Activated T-helper 2 cell treated with anti-CD3 and anti-CD28 coated beads, Interferon-gamma antibody, Interleukin-2, Interleukin-4, amounts not matched to agents 10 μg/mL and 5 μg/mL and 100 μg/mL, durations not matched to agents 14 hours and 24 hours and 36 hours (primary cell): ENCODE measurements at regions of chr5 and their contacts with region 1.

Region 1: GRCh38 chr5:96896806-96897205 is 20.5 kb downstream of the ERAP2 start:
- DNase-seq: no peak
- H3K4me3 Mint-ChIP-seq: peak overlapping the region; percentile 82
- H3K27ac Mint-ChIP-seq: peak overlapping the region; percentile 96
- H3K4me1 Mint-ChIP-seq: peaks cover 50% of the 10 kb centered on the region
- H3K27me3 Mint-ChIP-seq: no peaks in the 10 kb centered on the region

Region 2: DNA sequence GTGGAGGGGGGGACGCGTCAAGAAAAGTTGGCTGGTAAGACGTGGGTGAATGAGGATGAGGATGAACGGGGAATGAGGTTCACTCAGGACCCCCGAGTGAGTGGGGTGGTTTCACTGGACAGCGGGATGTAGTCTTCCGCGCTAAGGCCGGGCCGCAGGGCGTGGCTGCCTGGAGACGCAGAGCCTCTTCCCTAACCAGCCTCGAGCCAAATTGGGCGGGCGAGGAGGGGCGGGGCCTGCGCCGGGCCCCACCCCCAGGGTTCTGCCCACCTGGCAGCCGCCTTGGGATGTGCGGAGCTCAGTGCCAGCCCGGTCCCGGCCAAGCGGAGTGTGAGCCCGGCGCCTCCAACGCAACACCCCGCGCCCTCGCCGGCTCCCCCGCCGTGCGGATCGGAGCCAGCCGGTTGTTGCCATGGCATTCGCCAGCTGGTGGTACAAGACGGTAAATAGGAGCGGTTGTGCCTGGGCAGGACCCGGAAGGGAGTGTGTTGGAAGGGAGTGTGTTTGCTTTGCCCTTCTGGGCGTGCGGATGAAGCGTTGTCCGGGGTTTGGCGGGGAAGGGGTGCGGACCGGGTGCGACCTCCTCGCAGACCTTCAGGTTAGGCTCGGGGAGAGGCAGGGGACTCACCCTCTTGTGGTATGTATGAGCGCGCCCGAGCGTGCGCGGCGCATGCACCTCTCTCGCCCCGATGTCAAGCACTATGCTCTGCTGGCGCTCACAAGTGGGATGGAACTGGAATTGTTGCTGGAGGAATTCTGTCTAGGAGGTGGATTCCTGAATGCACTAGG is 233.9 kb before region 1 on chr5:
- intact Hi-C with region 1: loop called (anchors 10 kb)
- DNase-seq: peak; percentile 82
- H3K4me3 Mint-ChIP-seq: peak overlapping the region; percentile 90
- H3K27ac Mint-ChIP-seq: peak overlapping the region; percentile 96
- H3K4me1 Mint-ChIP-seq: peaks cover 55% of the 10 kb centered on the region
- H3K27me3 Mint-ChIP-seq: peaks cover 26% of the 10 kb centered on the region

Region 3: GRCh38 chr5:96861076-96861475 is 35.7 kb before region 1 on chr5:
- intact Hi-C with region 1: loop called (anchors 5 kb)
- DNase-seq: no peak
- H3K4me3 Mint-ChIP-seq: no peak overlapping the region
- H3K27ac Mint-ChIP-seq: no peak overlapping the region
- H3K4me1 Mint-ChIP-seq: peaks cover 38% of the 10 kb centered on the region
- H3K27me3 Mint-ChIP-seq: no peaks in the 10 kb centered on the region

Region 4: DNA sequence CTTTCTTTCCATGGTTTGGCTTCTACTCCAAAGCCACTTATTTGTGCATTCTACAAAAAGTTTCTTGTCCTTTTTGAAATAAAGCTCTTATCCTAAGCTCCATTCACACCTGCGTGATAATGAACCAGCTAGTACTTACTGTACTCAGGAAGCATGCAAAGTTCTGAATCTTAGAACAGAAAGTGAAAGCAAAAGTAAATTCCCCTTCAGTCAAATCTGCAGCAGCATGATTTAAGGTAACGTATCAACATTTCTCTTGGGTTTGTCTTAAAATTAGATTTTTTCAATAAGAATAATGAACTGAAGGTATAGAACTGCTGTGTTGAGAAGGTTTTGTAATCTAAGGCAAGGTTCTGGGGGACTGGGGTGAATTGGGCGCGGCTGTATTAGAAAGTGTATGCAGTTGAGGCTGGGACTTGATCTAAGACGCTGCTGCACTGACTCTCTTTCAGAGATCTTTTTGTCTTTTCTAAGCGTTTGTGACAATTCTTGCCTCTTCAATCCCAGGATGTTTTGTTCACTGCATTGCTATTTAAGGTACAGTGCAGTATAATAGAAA is 20.4 kb before region 1 on chr5 and contains the start of gene ERAP2:
- intact Hi-C with region 1: loop called (anchors 1 kb)
- DNase-seq: no peak
- H3K4me3 Mint-ChIP-seq: peak within 1 kb of the TSS; percentile 84
- H3K27ac Mint-ChIP-seq: peak within 1 kb of the TSS; percentile 92
- H3K4me1 Mint-ChIP-seq: peaks cover 64% of the 10 kb centered on the region
- H3K27me3 Mint-ChIP-seq: no peaks in the 10 kb centered on the region
- total RNA-seq, gene ERAP2: 46.8 and 49.3 TPM in 2 replicates

Region 5: GRCh38 chr5:96885518-96886338 is 11.1 kb before region 1 on chr5:
- intact Hi-C with region 1: loop called (anchors 1 kb)
- DNase-seq: no peak
- H3K4me3 Mint-ChIP-seq: peak overlapping the region; percentile 19
- H3K27ac Mint-ChIP-seq: peak overlapping the region; percentile 75
- H3K4me1 Mint-ChIP-seq: peaks cover 59% of the 10 kb centered on the region
- H3K27me3 Mint-ChIP-seq: no peaks in the 10 kb centered on the region

Region 6: GRCh38 chr5:96919754-96920197 is 23.0 kb after region 1 on chr5:
- intact Hi-C with region 1: loop called (anchors 1 kb)
- DNase-seq: no peak
- H3K4me3 Mint-ChIP-seq: no peak overlapping the region
- H3K27ac Mint-ChIP-seq: no peak overlapping the region
- H3K4me1 Mint-ChIP-seq: peaks cover 35% of the 10 kb centered on the region
- H3K27me3 Mint-ChIP-seq: no peaks in the 10 kb centered on the region

Region 7: GRCh38 chr5:96957254-96958049 is 60.6 kb after region 1 on chr5:
- intact Hi-C with region 1: loop called (anchors 1 kb)
- DNase-seq: no peak
- H3K4me3 Mint-ChIP-seq: peak overlapping the region; percentile 31
- H3K27ac Mint-ChIP-seq: peak overlapping the region; percentile 82
- H3K4me1 Mint-ChIP-seq: peaks cover 63% of the 10 kb centered on the region
- H3K27me3 Mint-ChIP-seq: no peaks in the 10 kb centered on the region